HEK293 (cell line): ENCODE measurements at regions of chr1 and their contacts with region 1.

Region 1: DNA sequence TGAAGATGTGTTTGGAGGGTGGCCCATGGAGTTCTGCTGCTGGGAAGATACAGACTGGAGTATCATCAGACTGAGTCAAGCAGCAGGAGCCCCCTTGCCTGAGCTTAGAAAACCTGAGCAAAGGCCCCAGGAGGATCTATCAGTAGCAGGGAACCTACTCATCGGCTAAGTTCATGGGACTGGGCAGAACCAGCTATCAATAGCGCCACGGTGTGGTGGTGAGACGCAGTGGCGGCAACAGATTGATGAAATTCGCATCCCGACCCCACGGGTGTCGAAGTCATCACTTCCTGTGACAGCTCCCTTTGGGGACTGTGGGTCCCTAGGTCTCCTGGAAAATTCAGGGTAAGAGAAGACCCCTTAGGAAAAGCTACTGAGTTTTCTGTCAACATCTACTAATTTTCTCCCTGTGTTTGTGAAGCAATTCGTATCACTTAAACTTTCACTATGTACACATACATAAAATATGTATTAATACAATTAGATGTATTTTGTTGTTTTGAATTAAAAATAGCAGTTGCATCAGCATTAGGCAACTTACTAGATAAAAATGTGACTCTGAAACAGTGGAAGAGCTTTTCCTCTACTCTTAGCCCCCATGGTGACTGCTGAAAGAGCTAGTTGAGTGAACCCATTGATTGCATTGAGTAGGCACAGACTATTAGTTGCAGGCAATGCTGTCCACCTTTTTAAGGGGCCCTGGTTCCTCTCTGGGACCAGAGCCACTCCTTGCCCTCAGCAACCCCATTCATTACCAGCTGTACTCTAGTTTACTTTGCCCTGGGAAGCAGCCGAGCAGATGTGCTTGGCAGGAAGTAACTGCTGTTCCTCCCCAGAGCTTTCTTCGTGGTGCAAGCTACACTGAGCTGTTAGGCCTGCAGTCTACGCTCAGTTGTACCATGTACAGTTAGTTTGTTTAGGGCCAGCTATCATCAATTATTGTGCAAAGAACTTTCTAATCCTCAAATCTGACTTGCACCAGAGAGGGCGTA is 7.3 kb upstream of the CACNA1S start:
- H3K4me3 ChIP-seq: no peak overlapping the region
- H3K27ac ChIP-seq: no peak overlapping the region
- H3K4me1 ChIP-seq: no peaks in the 10 kb centered on the region
- CTCF ChIP-seq: peak; percentile 76

Region 2: GRCh38 chr1:201023517-201023902 is 96.0 kb before region 1 on chr1 and contains the start of gene KIF21B:
- CTCF ChIA-PET with region 1: interaction called, 14 read pairs
- POLR2A ChIA-PET with region 1: no interaction called
- H3K4me3 ChIP-seq: peak within 1 kb of the TSS; percentile 46
- H3K27ac ChIP-seq: peak within 1 kb of the TSS; percentile 27; the same call in 1 of the 2 replicates
- H3K4me1 ChIP-seq: no peaks in the 10 kb centered on the region
- CTCF ChIP-seq: no peak

Region 3: DNA sequence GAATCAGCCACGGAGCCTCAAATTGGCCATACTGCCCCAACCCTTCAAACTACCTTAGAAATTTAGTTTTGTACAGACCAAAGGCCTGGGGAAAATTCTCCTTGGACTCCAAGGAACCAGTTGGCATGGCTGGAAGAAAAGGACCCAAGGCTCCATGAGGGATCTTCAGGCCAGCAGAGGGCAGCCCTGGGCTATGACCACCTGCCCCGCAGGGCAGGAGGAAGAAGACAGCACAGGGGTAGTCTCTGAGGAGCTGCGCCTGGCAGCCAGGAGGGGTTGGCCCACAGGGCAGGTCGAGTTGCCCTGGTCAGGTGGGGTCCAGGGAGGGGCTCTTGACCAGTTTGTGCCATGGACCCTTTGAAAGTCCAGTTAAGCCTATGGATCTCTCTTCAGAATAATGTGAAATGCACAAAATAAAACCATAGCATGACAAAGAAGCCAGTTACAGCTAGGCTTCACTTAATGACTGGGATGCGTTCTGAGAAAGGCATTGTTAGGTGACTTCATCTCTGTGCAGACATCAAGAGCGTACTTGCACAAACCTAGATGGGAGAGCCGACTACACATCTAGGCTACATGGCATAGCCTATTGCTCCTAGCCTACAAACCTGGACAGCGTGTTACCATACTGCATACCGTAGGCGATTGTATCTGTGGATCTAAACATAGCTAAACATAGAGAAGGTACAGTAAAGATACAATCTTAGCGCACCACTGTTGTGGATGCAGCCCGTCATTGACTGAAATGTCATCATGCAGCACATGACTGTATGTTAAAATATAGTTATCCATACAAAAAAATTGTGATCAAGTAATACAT is 33.4 kb before region 1 on chr1:
- CTCF ChIA-PET with region 1: interaction called, 38 read pairs
- POLR2A ChIA-PET with region 1: no interaction called
- H3K4me3 ChIP-seq: no peak overlapping the region
- H3K27ac ChIP-seq: no peak overlapping the region
- H3K4me1 ChIP-seq: no peaks in the 10 kb centered on the region
- CTCF ChIP-seq: peak; percentile 60

Region 4: GRCh38 chr1:201108614-201109013 is 10.9 kb before region 1 on chr1:
- CTCF ChIA-PET with region 1: interaction called, 11 read pairs
- POLR2A ChIA-PET with region 1: no interaction called
- H3K4me3 ChIP-seq: no peak overlapping the region
- H3K27ac ChIP-seq: no peak overlapping the region
- H3K4me1 ChIP-seq: no peaks in the 10 kb centered on the region
- CTCF ChIP-seq: no peak

Region 5: GRCh38 chr1:201137579-201138310 is 18.2 kb after region 1 on chr1:
- CTCF ChIA-PET with region 1: interaction called, 13 read pairs
- POLR2A ChIA-PET with region 1: no interaction called
- H3K4me3 ChIP-seq: no peak overlapping the region
- H3K27ac ChIP-seq: no peak overlapping the region
- H3K4me1 ChIP-seq: no peaks in the 10 kb centered on the region
- CTCF ChIP-seq: no peak

Region 6: GRCh38 chr1:201154389-201155165 is 35.1 kb after region 1 on chr1 and contains the start of gene TMEM9:
- CTCF ChIA-PET with region 1: interaction called, 10 read pairs
- POLR2A ChIA-PET with region 1: no interaction called
- H3K4me3 ChIP-seq: peak within 1 kb of the TSS; percentile 78
- H3K27ac ChIP-seq: peak within 1 kb of the TSS; percentile 55; the same call in 1 of the 2 replicates
- H3K4me1 ChIP-seq: no peaks in the 10 kb centered on the region; the same call in 1 of the 2 replicates
- CTCF ChIP-seq: no peak

Region 7: DNA sequence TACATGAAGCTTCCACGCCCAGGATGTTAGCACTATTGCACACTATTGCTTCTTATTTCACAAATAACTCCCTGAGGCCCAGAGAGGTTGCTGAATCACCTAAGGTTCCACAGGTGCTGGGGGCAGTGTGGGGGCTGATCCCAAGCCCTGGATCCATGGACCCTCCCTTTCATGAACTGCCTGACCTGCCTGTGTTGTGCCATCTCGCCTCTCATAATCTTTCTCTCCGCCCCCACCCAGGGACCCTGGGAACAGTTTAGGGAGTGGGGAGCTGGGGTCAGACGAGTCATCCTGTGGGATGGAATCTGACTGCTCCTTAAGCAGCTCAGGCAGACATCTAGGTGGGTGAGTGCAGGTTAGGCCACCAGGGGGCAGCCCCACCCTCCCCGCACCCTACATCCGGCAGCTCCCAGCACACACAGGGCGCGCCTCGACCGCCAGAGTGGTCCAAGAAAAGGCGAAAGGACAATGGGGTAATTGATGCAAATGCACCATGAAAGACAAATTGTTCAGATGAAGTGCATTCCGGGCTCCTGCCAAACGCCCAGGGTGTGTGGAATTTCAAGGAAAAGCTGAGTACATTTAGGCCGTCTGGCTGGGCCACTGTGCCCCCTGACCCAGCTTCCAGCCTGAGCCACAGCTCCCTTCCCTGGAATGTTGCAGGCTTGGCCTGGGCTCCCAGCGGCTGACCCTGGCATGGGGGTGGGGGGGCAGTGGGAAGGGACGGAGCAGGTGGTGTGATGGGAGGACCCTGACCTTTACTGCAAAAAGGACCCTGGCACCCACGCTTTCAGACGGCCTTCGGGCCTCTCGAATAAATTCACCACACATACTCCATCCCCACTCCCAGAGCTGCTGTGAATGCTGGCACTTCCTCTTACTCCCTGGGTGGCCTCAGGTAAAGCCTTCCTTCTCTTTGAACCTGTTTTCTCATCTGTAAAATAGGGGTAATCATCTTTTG is 328.7 kb after region 1 on chr1:
- CTCF ChIA-PET with region 1: no interaction called
- POLR2A ChIA-PET with region 1: no interaction called
- H3K4me3 ChIP-seq: no peak overlapping the region
- H3K27ac ChIP-seq: no peak overlapping the region
- H3K4me1 ChIP-seq: 0 out of 2 replicates have a peak, but pooled peaks cover 6% of the 10 kb centered on the region
- CTCF ChIP-seq: peak; percentile 66